ENCODE measurements at regions of chr16 and their contacts with region 1.

Region 1: DNA sequence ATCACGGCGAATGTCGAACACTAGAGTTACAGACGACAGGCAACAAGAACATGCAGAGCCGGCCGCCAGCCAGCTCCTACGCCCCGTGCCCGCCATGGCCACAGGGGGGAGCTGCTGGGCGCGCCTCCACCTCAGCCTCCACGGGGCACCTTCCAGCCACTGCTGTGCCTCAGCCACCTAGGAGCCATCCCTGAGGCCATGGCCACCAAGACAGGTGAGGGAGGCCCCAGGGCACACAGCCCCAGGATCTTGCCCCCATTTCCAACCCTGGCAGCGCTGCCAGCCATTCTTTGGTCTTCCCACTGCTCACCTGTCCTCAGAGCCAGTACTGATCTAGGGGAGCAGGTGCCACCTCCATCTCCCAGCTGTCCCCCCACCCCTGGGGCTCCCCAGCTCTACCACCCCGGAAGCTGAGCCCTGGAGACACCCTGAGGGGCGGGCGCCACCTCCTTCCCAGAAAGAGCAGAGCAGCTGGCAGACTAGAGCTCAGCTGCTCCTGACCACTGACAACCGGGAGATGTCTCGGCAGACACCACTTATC is 11.8 kb downstream of the GNPTG start:
- DNase-seq: peak in 1 of 2 experiments; percentile 74
- H3K4me3 ChIP-seq: no peak overlapping the region
- H3K4me3 Mint-ChIP-seq: no peak overlapping the region
- H3K27ac Mint-ChIP-seq: no peak overlapping the region
- H3K4me1 ChIP-seq: no peaks in the 10 kb centered on the region
- H3K4me1 Mint-ChIP-seq: no peaks in the 10 kb centered on the region
- H3K27me3 ChIP-seq: no peaks in the 10 kb centered on the region
- H3K27me3 Mint-ChIP-seq: no peaks in the 10 kb centered on the region
- CTCF ChIP-seq: peak; percentile 72 to 83

Region 2: GRCh38 chr16:1378804-1379303 is 15.3 kb after region 1 on chr16:
- CTCF ChIA-PET with region 1: interaction called, 14 read pairs
- POLR2A ChIA-PET with region 1: no interaction called
- intact Hi-C with region 1: no loop called
- DNase-seq: peak; percentile 72 to 75
- H3K4me3 ChIP-seq: peak overlapping the region; percentile 69
- H3K4me3 Mint-ChIP-seq: peak overlapping the region; percentile 88
- H3K27ac Mint-ChIP-seq: peak overlapping the region; percentile 89
- H3K4me1 ChIP-seq: peaks cover 12% of the 10 kb centered on the region; the same call in 1 of the 2 replicates
- H3K4me1 Mint-ChIP-seq: no peaks in the 10 kb centered on the region
- H3K27me3 ChIP-seq: no peaks in the 10 kb centered on the region
- H3K27me3 Mint-ChIP-seq: no peaks in the 10 kb centered on the region
- CTCF ChIP-seq: no peak

Region 3: GRCh38 chr16:1413684-1414531 is 50.3 kb after region 1 on chr16:
- CTCF ChIA-PET with region 1: no interaction called
- POLR2A ChIA-PET with region 1: no interaction called
- intact Hi-C with region 1: no loop called
- DNase-seq: peak; percentile 59 to 74
- H3K4me3 ChIP-seq: peak overlapping the region; percentile 75
- H3K4me3 Mint-ChIP-seq: peak overlapping the region; percentile 68
- H3K27ac Mint-ChIP-seq: peak overlapping the region; percentile 57
- H3K4me1 ChIP-seq: peaks cover 21% of the 10 kb centered on the region
- H3K4me1 Mint-ChIP-seq: no peaks in the 10 kb centered on the region
- H3K27me3 ChIP-seq: no peaks in the 10 kb centered on the region
- H3K27me3 Mint-ChIP-seq: no peaks in the 10 kb centered on the region
- CTCF ChIP-seq: peak; percentile 57 to 58

Measured in Caco-2 (cell line).